Vagina (tissue), 2 donors: ENCODE measurements at regions of chr19 and their contacts with region 1.

Region 1: DNA sequence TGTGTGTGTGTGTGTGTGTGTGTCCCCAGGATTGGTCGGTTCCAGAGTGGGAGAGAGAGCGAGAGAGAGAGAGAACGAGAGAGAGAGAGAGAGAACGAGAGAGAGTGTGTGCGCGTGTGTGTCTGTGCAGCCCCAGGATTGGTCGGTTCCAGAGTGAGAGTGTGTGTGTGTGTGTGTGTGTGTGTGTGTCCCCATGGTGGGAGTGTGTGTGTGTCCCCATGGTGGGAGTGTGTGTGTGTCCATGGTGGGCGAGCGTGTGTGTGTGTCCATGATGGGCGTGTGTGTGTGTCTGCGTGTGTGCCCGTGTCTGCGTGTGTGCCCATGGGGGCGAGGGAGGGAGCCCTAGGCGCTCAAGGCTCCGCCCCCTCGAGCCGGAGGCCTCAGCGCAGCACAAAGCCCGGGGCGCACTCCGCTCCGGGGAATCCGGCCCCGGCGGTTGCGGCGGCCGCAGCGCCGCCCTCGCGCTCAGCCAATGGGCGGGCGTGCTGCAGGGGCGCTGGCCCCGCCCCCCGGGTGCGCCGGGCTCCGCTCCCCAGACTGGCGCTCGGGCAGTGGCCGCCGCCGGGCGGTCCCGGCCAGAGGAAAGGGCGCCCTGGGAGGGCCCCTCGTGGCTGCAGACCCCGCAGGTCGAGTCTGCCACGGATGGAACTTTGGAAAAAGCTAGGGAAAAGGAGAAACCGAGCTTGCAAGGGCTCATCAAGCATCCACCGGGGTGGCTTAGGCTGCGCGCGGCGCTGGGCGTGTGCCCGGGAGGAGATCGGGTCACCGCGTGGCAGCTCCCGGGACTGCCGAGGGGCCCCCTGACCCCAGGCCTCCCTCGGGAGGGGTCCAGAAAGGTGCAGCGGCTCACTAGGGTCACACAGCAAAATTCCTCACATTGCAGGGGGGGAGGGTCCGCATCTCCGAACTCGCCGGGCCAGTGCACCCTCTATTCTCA is 96.2 kb downstream of the INSR start:
- DNase-seq: peak in 1 of 2 donors; percentile 94
- H3K4me3 ChIP-seq: peak overlapping the region; percentile 62 to 80
- H3K27ac ChIP-seq: peak overlapping the region; percentile 85
- H3K4me1 ChIP-seq: peaks cover 19% of the 10 kb centered on the region
- H3K27me3 ChIP-seq: no peaks in the 10 kb centered on the region
- CTCF ChIP-seq: no peak
- POLR2A ChIP-seq: peak in 1 of 2 donors; percentile 72

Region 2: DNA sequence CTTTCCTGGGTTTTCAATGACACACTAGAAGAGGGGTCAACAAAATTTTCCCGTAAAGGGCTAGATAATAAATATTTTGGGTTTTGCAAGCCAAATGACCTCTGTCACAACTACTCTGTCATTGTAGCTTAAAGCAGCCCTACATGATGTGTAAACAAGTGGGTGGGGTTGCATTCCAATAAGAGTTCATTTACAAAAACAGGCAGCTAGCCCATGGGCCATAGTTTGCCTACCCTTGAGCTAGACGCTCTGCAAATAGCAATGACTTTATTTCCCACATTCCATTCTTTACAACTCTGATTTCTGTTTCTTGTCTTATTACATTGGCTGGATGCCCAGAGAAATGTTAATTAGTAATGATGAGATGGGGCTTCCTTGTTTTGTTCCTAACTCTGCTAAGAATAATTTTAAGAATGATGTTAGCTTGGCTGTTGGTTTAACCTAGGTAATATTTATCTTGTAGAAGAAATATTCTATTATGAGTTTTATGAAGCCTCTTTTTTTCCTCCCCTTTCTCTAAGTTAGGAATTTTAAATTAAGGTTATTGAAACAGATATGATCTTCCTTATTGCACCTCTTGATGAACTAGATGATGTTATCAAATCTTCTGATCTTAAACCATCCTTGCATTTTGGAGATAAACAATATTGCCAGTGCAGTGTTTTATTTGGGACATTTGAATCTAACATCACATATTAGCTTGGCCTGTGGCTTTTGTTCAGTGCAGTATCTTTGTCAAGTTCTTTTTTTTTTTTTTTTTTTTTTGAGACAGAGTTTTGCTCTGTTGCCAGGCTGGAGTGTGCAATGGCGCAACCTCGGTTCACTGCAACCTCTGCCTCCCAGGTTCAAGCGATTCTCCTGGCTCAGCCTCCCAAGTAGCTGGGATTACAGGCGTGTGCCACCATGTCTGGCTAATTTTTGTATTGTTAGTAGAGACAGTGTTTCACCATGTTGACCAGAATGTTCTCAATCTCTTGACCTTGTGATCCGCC is 52.2 kb before region 1 on chr19:
- intact Hi-C with region 1: loop called (anchors 10 kb)
- DNase-seq: no peak
- H3K4me3 ChIP-seq: no peak overlapping the region
- H3K27ac ChIP-seq: no peak overlapping the region
- H3K4me1 ChIP-seq: no peaks in the 10 kb centered on the region
- H3K27me3 ChIP-seq: no peaks in the 10 kb centered on the region
- CTCF ChIP-seq: no peak
- POLR2A ChIP-seq: no peak

Region 3: DNA sequence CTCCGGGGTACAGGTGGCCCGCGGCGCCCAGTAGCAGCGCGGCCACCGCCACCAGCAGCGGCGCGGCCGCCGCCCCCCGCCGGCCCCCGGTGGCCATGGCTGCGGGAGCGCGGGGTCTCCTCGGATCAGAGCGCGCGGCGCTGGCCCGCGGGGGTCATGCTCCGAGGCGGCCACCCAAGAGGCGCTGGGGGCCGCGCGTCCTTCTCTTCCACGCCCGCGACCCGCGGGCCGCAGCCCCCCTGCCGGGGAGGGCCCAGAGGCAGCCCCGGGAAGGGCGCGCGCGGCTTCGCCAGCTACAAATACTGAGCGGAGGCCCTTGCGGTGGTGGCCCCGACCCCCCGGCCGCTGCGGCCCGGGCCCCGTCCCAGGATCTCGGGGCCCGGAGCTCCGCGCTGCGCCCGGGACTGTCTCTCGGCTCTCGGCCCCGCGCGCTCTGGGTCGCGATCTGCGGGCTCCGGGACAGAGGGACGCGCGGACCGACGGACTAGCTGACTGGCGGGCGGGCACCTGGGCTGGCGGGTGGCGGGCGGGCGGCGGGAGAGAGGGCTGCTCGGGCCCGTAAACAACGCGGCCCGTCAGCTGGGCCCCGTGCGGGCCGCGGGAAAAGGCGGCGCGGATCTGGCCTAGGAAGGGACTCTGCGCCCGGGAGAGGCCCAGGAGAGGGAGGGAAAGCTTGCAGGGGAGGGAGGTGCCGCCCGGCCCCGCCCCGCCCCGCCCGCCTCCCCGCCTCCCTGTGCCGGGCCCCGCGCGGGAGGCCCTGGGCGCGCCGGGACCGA is 96.0 kb after region 1 on chr19 and contains the start of gene INSR:
- intact Hi-C with region 1: loop called (anchors 1 kb)
- DNase-seq: peak in 1 of 2 donors; percentile 89
- H3K4me3 ChIP-seq: peak within 1 kb of the TSS; percentile 71 to 100
- H3K27ac ChIP-seq: peak within 1 kb of the TSS; percentile 81
- H3K4me1 ChIP-seq: peaks cover 34% of the 10 kb centered on the region
- H3K27me3 ChIP-seq: no peaks in the 10 kb centered on the region
- CTCF ChIP-seq: no peak
- POLR2A ChIP-seq: peak in 1 of 2 donors; percentile 56
- total RNA-seq, gene INSR: 86.7 TPM